K562 (cell line): ENCODE measurements at regions of chrX and their contacts with region 1.

Region 1: GRCh38 chrX:23901805-23902204 is 5.9 kb downstream of the APOO start:
- DNase-seq: peak; percentile 13 to 75 (median 36)
- ATAC-seq: peak; percentile 94
- H3K4me3 ChIP-seq: no peak overlapping the region
- H3K27ac ChIP-seq: no peak overlapping the region
- H3K4me1 ChIP-seq: peaks cover 2 to 18% of the 10 kb centered on the region in 2 experiments; a peak in 3 of 5 replicates
- H3K27me3 ChIP-seq: no peaks in the 10 kb centered on the region
- CTCF ChIP-seq: peak; percentile 56 to 79 (median 73)
- EP300 ChIP-seq: no peak
- POLR2A ChIP-seq: no peak
- RAD21 ChIP-seq: peak; percentile 92 to 94

Region 2: DNA sequence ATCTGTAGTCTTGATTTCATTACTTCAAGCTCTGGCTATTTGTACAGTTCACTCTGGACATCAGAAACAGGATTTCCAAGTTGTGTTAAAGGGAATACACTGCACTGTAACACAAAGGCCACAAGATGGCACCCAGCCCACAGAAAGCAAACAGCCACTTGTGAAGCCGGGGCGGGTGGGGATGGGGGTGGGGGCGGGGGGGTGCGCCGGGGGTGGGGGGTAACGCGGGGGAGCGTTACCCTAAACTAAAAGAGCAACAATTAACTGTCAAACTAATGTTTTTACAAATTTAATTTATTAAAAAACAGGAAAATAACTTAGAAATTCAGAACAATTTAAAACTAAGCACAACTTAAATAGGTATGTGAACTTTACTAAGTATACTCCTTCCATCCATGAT is 207.2 kb before region 1 on chrX:
- CTCF ChIA-PET with region 1: interaction called, 74 read pairs
- POLR2A ChIA-PET with region 1: interaction called, 4 read pairs
- in situ Hi-C with region 1: loop called (anchors 5 kb)
- intact Hi-C with region 1: loop called (anchors 1 kb)
- DNase-seq: peak; percentile 47 to 78 (median 58)
- ATAC-seq: peak; percentile 91
- H3K4me3 ChIP-seq: no peak overlapping the region
- H3K27ac ChIP-seq: no peak overlapping the region
- H3K4me1 ChIP-seq: peaks cover 0 to 4% of the 10 kb centered on the region in 2 experiments; a peak in 3 of 5 replicates
- H3K27me3 ChIP-seq: no peaks in the 10 kb centered on the region
- CTCF ChIP-seq: peak in 2 of 3 experiments; percentile 67 to 72; a peak in 4 of 6 replicates
- EP300 ChIP-seq: no peak
- POLR2A ChIP-seq: no peak
- RAD21 ChIP-seq: peak in 1 of 2 experiments; percentile 58; a peak in 2 of 4 replicates

Region 3: DNA sequence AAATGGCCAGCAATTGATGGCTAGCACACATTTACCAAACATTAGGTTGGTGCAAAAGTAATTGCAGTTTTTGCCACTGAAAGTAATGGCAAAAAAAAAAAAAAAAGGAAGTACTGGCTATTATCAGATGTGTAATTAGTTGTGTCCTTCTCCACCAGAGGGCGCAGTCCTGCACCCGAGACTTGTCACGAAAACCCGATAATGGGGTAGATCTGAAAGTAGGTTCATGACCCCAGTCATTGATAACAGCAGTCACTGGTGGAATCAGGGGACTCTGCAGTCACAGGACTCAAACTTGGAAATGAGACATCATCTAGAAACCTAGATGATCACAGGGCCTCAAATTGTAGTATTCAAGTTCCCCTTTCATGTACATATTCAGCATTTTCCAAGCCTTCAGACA is 145.6 kb before region 1 on chrX:
- CTCF ChIA-PET with region 1: interaction called, 33 read pairs
- POLR2A ChIA-PET with region 1: interaction called, 6 read pairs
- in situ Hi-C with region 1: loop called (anchors 5 kb)
- intact Hi-C with region 1: loop called (anchors 1 kb)
- DNase-seq: peak; percentile 63 to 84 (median 66)
- ATAC-seq: peak; percentile 83
- H3K4me3 ChIP-seq: no peak overlapping the region
- H3K27ac ChIP-seq: no peak overlapping the region
- H3K4me1 ChIP-seq: peaks cover 0 to 3% of the 10 kb centered on the region in 2 experiments; a peak in 2 of 5 replicates
- H3K27me3 ChIP-seq: no peaks in the 10 kb centered on the region
- CTCF ChIP-seq: peak; percentile 64 to 73 (median 71)
- EP300 ChIP-seq: no peak
- POLR2A ChIP-seq: no peak
- RAD21 ChIP-seq: peak; percentile 46 to 58

Region 4: GRCh38 chrX:23844502-23845138 is 57.2 kb before region 1 on chrX:
- CTCF ChIA-PET with region 1: no interaction called
- POLR2A ChIA-PET with region 1: no interaction called
- in situ Hi-C with region 1: no loop called
- intact Hi-C with region 1: loop called (anchors 5 kb)
- DNase-seq: peak; percentile 11 to 66 (median 26)
- ATAC-seq: peak; percentile 86
- H3K4me3 ChIP-seq: no peak overlapping the region
- H3K27ac ChIP-seq: peak overlapping the region; percentile 74
- H3K4me1 ChIP-seq: peaks cover 8 to 19% of the 10 kb centered on the region in 2 experiments; a peak in 4 of 5 replicates
- H3K27me3 ChIP-seq: no peaks in the 10 kb centered on the region
- CTCF ChIP-seq: no peak
- EP300 ChIP-seq: peak; percentile 74
- POLR2A ChIP-seq: no peak
- RAD21 ChIP-seq: peak in 1 of 2 experiments; percentile 23; a peak in 2 of 4 replicates